Common myeloid progenitor, CD34-positive (primary cell): ENCODE measurements at regions of chr14 and their contacts with region 1.

Region 1: DNA sequence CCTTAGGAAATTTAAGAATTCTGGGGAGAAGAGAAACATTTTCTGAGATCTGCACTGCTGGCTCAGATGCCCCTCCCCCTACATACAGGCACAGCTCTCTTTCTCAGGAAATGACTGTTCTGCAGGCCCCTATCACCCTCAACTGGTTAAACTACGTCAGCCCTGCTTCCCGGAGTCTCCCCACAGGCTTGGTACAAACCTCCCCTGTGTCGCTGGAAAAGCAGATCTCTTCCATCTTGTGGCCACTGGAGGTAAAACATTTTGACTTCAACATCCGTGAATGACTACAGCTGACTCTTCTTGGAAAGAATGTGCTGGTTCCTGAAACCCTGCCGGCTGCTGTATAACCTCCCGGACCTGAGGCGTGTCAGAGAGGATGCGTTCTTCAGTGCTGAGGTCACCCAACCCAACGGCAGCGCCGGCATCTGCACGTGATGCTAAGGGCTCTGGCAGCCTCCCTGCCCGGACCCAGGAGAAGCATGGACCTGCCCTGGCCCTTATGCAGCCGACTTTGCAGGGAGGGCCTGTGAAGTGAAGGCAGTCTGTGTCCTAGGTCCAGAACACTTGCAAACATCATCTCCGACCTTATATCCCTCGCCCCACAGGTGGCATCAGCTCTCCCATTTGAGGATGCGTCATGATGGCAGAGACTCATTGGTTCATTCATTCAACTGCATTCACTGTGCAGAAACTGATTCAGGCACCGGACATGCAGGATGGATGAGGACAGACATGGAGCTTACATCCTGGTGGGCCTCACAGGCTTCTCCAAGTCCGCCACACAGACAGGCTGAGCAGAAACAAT is 129.3 kb downstream of the GCH1 start:
- DNase-seq: peak; percentile 98
- H3K4me3 ChIP-seq: peak overlapping the region in 5 of 7 experiments; percentile 23 to 65 (median 38)
- H3K27ac ChIP-seq: peak overlapping the region; percentile 21 to 52
- H3K4me1 ChIP-seq: peaks cover 11 to 53% (median 46%) of the 10 kb centered on the region in 4 experiments
- H3K27me3 ChIP-seq: no peaks in the 10 kb centered on the region

Region 2: DNA sequence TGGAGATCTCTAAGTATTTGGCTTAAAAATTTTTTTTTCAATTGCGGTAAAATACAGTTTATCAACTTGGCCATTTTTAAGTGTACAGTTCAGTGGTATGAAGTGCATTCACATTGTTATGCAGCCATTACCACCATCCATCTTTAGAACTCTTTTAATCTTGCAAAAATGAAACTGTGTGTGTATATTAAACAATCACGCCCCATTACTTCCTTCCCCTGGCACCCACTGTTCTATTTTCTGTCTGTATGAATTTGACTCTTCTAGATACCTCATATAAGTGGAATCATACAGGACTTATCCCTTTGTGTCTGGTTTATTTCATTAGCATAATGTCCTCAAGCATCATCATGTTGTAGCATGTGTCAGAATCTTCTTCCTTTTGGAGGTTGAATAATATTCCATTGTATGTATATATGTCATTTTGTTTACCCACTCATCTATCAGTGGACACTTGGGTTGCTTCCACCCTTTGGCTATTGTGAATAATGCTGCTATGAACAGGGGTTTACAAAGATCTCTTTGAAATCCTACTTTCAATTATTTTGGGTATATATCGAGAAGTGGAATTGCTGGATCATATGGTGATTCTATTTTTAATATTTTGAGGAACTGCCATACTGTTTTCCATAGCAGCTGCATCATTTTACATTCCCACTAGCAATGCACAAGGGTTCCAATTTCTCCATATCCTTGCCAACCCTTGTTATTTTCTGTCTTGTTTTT is 143.6 kb before region 1 on chr14:
- CTCF ChIA-PET with region 1: interaction called, 11 read pairs
- POLR2A ChIA-PET with region 1: no interaction called
- DNase-seq: no peak
- H3K4me3 ChIP-seq: peak overlapping the region in 1 of 7 experiments; percentile 5
- H3K27ac ChIP-seq: no peak overlapping the region
- H3K4me1 ChIP-seq: peaks cover 18 to 47% (median 31%) of the 10 kb centered on the region in 4 experiments
- H3K27me3 ChIP-seq: no peaks in the 10 kb centered on the region

Region 3: DNA sequence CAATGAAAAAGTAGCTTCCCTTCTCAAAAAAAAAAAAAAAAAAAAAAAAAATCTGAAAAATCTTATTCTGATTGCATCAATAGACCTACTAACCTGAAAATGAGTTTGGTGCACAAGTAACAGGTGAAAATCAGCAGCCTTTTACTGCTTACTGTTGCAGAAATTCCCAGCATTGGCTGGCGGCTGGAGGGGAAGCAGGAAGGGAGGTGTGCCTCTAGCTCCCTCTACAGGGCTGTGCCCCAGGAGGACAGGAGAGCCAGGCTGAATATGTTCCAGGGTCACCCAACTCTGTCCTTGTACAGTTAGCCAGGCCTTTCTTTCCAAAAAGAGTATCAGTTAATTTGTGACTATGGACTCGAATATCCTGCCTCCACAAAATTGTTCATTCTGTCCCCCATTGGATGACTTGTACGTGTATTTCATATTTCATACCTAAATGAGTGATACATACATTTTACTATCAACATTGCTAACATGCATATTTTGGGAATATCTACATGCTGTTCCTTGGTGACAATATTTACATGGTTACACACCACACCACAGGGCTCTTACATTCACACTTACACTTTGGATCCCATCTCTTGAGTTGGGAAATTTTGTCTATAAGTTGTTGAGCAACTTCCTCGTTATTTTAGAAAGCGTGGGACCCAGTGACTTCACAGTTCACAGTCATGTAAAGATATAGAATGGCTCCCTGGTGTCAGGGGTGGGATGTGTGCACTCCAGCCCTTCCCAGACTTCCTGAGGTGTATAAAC is 81.7 kb before region 1 on chr14:
- CTCF ChIA-PET with region 1: interaction called, 27 read pairs
- POLR2A ChIA-PET with region 1: no interaction called
- DNase-seq: peak; percentile 54 to 67 (median 66)
- H3K4me3 ChIP-seq: no peak overlapping the region
- H3K27ac ChIP-seq: no peak overlapping the region
- H3K4me1 ChIP-seq: peaks cover 0 to 12% (median 5%) of the 10 kb centered on the region in 4 experiments
- H3K27me3 ChIP-seq: no peaks in the 10 kb centered on the region

Region 4: GRCh38 chr14:54730156-54730961 is 43.0 kb before region 1 on chr14:
- CTCF ChIA-PET with region 1: interaction called, 35 read pairs
- POLR2A ChIA-PET with region 1: no interaction called
- DNase-seq: peak; percentile 59 to 93 (median 90)
- H3K4me3 ChIP-seq: peak overlapping the region in 6 of 7 experiments; percentile 30 to 71 (median 46)
- H3K27ac ChIP-seq: peak overlapping the region; percentile 27 to 65
- H3K4me1 ChIP-seq: peaks cover 4 to 14% (median 10%) of the 10 kb centered on the region in 4 experiments
- H3K27me3 ChIP-seq: no peaks in the 10 kb centered on the region

Region 5: GRCh38 chr14:54805521-54806322 is 32.3 kb after region 1 on chr14:
- CTCF ChIA-PET with region 1: interaction called, 76 read pairs
- POLR2A ChIA-PET with region 1: no interaction called
- DNase-seq: peak; percentile 80 to 87 (median 84)
- H3K4me3 ChIP-seq: peak overlapping the region in 1 of 7 experiments; percentile 19
- H3K27ac ChIP-seq: no peak overlapping the region
- H3K4me1 ChIP-seq: peaks cover 0 to 8% (median 0%) of the 10 kb centered on the region in 4 experiments
- H3K27me3 ChIP-seq: peaks cover 0 to 2% (median 0%) of the 10 kb centered on the region in 5 experiments

Region 6: GRCh38 chr14:54848910-54849309 is 75.5 kb after region 1 on chr14:
- CTCF ChIA-PET with region 1: no interaction called
- POLR2A ChIA-PET with region 1: no interaction called
- DNase-seq: no peak
- H3K4me3 ChIP-seq: no peak overlapping the region
- H3K27ac ChIP-seq: no peak overlapping the region
- H3K4me1 ChIP-seq: no peaks in the 10 kb centered on the region
- H3K27me3 ChIP-seq: no peaks in the 10 kb centered on the region